Right ventricle myocardium inferior (tissue), 1 donor: ENCODE measurements at regions of chrX and their contacts with region 1.

Region 1: DNA sequence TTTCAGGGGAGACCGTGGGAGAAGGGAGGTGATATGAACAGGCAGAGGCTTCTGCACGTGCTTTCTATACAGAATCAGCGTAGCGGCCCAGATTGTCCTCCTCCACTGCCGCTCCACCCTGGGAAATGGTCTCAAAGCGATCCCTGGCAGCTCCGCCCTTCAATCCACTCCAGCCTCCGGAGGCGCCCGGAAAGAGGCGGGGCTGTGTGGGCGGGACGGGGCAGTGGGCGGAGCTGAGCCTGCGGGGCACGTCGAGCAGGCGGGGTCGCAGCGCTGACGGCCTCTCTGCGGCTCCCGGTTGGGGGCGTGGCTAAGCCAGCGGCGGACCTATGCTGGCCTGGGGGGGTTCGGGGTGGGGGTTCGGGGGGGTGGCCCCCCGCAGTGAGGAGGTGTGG is 210 bp upstream of the SMIM10L2A start:
- DNase-seq: peak; percentile 93
- ATAC-seq: peak; percentile 99

Region 2: GRCh38 chrX:135454816-135455215 is 33.3 kb after region 1 on chrX:
- intact Hi-C with region 1: no loop called
- DNase-seq: no peak
- ATAC-seq: no peak

Region 3: DNA sequence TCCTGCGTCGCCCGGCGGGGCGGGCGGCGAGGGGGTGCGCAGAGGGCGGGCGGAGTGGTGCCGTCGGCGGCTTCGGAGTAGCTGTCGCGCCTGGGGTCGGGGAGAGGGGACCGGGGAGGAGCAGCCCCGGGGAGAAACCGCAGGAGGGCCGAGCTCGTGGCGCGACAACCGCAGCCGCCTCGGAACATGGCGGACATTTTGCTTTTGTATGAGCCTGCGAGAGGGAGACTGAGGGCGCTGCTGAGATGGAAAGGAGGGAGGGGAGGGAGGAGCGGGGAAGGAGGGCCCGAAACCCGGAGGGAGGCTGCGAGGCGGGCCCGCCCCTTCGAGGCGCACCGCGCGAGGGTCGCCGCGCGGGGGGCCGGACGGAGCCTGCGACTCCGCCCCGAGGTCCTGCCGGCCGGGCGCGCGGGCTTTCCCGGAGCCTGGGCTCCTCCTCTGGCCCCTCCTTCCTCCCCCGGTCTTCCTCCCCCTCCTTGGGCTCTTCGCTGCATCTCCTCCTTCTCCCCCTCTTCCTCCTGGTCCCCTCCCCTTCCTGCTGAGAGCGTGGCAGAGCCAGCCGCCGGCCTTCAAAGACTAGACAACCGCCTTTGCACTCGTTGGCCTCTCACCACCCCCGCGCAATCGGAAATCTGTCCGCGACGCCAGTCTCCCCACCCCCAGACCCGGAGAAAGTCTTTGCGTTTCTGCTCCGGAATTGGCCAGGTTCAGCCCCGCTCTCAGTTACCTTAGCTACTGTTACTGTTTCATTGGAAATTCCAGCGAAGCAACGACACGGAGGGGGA is 100.1 kb after region 1 on chrX:
- intact Hi-C with region 1: loop called (anchors 2 kb)
- DNase-seq: peak; percentile 87
- ATAC-seq: peak; percentile 96

Region 4: GRCh38 chrX:135572436-135572835 is 150.9 kb after region 1 on chrX:
- intact Hi-C with region 1: no loop called
- DNase-seq: no peak
- ATAC-seq: no peak